CD8-positive, alpha-beta T cell (primary cell): ENCODE measurements at regions of chrX and their contacts with region 1.

Region 1: GRCh38 chrX:123732670-123733363 is at the start of gene THOC2:
- DNase-seq: peak; percentile 51 to 89 (median 78)
- ATAC-seq: peak; percentile 93
- H3K4me3 ChIP-seq: peak within 1 kb of the TSS; percentile 79 to 95
- H3K4me3 Mint-ChIP-seq: peak within 1 kb of the TSS; percentile 95
- H3K27ac ChIP-seq: peak within 1 kb of the TSS; percentile 48 to 75
- H3K27ac Mint-ChIP-seq: peak within 1 kb of the TSS; percentile 91
- H3K4me1 ChIP-seq: peaks cover 20% of the 10 kb centered on the region
- H3K4me1 Mint-ChIP-seq: peaks cover 33% of the 10 kb centered on the region
- H3K27me3 ChIP-seq: no peaks in the 10 kb centered on the region
- H3K27me3 Mint-ChIP-seq: no peaks in the 10 kb centered on the region
- CTCF ChIP-seq: no peak
- total RNA-seq, gene THOC2: 64.8 to 67.2 TPM

Region 2: DNA sequence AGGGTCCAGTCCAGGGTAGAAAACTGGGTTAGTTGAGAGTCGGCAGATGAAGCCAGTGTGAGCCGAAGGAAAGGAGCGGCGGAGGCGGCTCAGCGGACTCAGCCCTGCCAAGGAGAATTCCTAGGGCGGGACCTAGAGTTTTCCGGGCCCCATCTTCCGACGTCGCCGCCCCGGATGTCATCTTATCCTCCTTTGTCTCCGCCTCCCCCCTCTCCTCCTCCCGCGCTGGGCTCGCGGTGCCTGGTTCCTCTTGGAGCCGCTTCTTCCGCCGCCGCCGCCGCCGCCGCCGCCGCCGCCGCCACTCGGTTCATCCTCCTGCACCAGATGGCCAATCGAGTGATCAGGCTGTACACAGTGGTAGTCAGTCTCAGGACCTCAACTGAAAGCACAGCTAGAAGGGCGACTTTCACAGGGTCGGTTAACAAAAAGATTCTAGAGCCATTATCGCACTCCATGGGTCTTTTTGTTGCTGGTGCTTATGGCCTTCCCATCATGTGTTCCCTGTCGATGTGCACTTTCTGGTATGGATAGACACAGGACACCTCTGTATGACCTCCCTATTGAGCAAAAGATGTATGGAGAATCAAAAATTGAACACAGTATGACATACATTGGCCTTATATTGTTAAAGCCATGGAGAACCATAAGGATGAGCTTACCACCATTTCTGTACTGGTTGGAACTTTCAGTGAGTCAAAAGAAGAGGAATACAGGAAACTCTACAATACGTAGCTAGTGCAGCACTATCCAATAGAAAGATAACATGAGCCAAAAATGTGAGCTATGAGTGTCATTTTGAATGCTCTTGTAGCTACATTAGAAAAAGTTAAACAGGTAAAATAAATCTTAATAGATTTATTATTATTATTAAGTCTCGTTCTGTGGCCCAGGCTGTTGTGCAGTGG is 32.4 kb after region 1 on chrX:
- CTCF ChIA-PET with region 1: no interaction called
- POLR2A ChIA-PET with region 1: no interaction called
- intact Hi-C with region 1: loop called in 1 of 2 experiments (anchors 5 kb)
- DNase-seq: peak in 8 of 9 experiments; percentile 10 to 72 (median 40)
- ATAC-seq: peak; percentile 81
- H3K4me3 ChIP-seq: peak overlapping the region; percentile 27 to 53
- H3K4me3 Mint-ChIP-seq: peak overlapping the region; percentile 82
- H3K27ac ChIP-seq: peak overlapping the region in 1 of 2 experiments; percentile 57
- H3K27ac Mint-ChIP-seq: peak overlapping the region; percentile 62
- H3K4me1 ChIP-seq: no peaks in the 10 kb centered on the region
- H3K4me1 Mint-ChIP-seq: peaks cover 7% of the 10 kb centered on the region
- H3K27me3 ChIP-seq: no peaks in the 10 kb centered on the region
- H3K27me3 Mint-ChIP-seq: no peaks in the 10 kb centered on the region
- CTCF ChIP-seq: no peak